GM12878 (cell line): ENCODE measurements at regions of chr2 and their contacts with region 1.

Region 1: DNA sequence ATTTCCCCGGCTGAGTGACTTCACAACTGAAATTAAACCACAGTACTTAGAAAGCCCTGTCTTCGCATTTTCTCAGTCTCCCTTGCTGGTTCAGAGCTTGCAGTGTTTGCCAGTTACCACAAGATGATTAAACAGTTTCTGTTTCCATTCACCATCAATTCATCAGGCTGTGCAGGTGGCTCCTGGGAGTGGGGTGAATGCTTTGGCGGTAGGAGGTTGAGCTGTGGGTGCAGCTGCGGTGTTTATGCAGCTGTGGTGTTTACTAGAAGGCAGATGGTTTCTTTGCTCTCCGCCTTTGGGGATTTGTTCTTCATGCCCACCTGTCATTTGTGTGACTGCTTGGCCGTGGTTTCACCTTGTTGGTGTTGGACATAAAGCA is 16.1 kb downstream of the ACOXL start:
- DNase-seq: peak; percentile 98
- ATAC-seq: peak; percentile 97
- H3K4me3 ChIP-seq: peak overlapping the region; percentile 21; the same call in 1 of the 2 replicates
- H3K27ac ChIP-seq: no peak overlapping the region
- H3K4me1 ChIP-seq: peaks cover 19% of the 10 kb centered on the region; the same call in 1 of the 2 replicates
- H3K27me3 ChIP-seq: no peaks in the 10 kb centered on the region
- CTCF ChIP-seq: no peak
- EP300 ChIP-seq: peak; percentile 90 to 97
- POLR2A ChIP-seq: no peak
- RAD21 ChIP-seq: peak; percentile 22; the same call in 1 of the 2 replicates

Region 2: GRCh38 chr2:110657724-110658305 is 90.7 kb before region 1 on chr2:
- CTCF ChIA-PET with region 1: interaction called, 4 read pairs
- POLR2A ChIA-PET with region 1: no interaction called
- RAD21 ChIA-PET with region 1: interaction called, 12 read pairs
- SMC1A ChIA-PET with region 1: interaction called, 6 read pairs
- in situ Hi-C with region 1: no loop called
- intact Hi-C with region 1: no loop called
- DNase-seq: no peak
- ATAC-seq: peak; percentile 71
- H3K4me3 ChIP-seq: no peak overlapping the region
- H3K27ac ChIP-seq: no peak overlapping the region
- H3K4me1 ChIP-seq: no peaks in the 10 kb centered on the region
- H3K27me3 ChIP-seq: no peaks in the 10 kb centered on the region
- CTCF ChIP-seq: no peak
- EP300 ChIP-seq: no peak
- POLR2A ChIP-seq: no peak
- RAD21 ChIP-seq: no peak

Region 3: DNA sequence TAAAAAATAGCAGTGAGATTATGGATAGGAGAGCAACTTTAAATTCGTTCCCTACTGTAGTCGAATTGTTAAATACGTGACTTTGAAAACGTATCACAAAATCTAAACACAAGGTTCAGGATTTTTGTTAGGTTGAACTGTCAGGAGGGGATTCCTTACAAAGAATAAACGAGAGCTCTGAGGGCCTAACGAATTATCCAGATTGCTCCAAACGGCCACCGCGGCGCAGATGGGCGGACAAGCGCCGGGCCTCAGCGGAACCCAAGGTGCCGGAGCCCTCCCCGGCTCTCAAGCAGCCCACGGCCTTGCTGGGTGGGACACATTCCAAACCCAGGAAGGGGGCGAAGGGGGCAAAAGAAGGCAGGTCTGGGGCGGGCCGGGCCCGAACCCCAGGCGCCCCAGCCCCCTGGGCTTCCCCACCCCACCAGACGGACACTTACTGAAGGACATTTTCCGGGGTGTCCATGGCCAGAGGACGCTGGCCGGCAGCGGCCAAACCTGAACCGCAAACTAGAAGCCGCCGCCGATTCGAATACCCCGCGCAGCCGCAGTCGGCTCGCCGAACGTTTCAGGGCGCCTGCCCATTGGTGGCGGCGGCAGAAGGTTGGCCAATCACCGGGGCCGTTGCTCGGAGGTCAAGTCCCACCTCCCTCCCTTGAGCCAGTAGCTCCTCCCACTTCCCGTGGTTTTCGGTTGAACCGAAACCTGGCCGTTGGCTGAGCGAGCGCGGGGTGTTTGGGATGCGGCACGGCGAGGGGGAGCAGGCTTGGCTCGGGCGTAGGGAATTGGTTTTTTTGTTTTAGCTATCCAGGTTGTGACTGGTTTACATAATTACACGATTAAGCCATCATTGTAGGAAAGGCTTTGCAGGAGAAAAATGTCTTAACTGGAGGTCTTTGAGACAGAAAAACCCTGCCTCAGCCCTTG is 70.7 kb before region 1 on chr2 and contains the start of gene BUB1:
- CTCF ChIA-PET with region 1: interaction called, 48 read pairs
- POLR2A ChIA-PET with region 1: interaction called, 28 read pairs
- RAD21 ChIA-PET with region 1: interaction called, 53 read pairs
- SMC1A ChIA-PET with region 1: interaction called, 251 read pairs
- in situ Hi-C with region 1: loop called (anchors 10 kb)
- intact Hi-C with region 1: loop called (anchors 2 kb)
- DNase-seq: peak; percentile 83
- ATAC-seq: peak; percentile 88
- H3K4me3 ChIP-seq: peak within 1 kb of the TSS; percentile 87
- H3K27ac ChIP-seq: peak within 1 kb of the TSS; percentile 98
- H3K4me1 ChIP-seq: peaks cover 9% of the 10 kb centered on the region
- H3K27me3 ChIP-seq: no peaks in the 10 kb centered on the region
- CTCF ChIP-seq: no peak
- EP300 ChIP-seq: peak in 1 of 2 experiments; percentile 52; a peak in 2 of 4 replicates
- POLR2A ChIP-seq: peak; percentile 87
- RAD21 ChIP-seq: no peak
- polyA plus RNA-seq, gene BUB1: 52.4 to 57.0 TPM

Region 4: DNA sequence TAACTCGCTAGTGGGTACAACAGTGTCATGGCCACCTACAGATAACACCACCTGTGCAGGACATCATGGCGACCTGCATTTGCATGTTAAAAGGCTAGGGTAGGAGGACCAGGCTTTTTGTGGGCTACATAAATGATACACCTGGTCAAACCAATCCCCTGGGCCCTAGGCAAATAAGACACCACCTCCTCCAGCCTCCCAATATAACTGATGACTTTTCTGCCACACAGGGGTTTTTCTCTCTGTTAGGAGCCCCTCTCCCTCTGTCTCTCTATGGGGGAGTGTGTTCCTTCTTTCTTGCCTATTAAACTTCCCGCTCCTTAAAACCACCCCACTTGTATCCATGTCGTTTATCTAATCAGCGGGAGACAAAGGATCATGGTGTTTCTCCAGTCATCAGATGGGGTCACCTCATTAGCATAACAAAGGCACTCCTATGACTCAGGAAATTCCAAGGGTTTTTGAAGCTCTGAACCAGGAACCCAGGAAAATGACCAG is 59.8 kb before region 1 on chr2:
- CTCF ChIA-PET with region 1: interaction called, 3 read pairs
- POLR2A ChIA-PET with region 1: interaction called, 3 read pairs
- RAD21 ChIA-PET with region 1: interaction called, 5 read pairs
- SMC1A ChIA-PET with region 1: interaction called, 3 read pairs
- in situ Hi-C with region 1: loop called (anchors 10 kb)
- intact Hi-C with region 1: no loop called
- DNase-seq: no peak
- ATAC-seq: no peak
- H3K4me3 ChIP-seq: no peak overlapping the region
- H3K27ac ChIP-seq: no peak overlapping the region
- H3K4me1 ChIP-seq: no peaks in the 10 kb centered on the region
- H3K27me3 ChIP-seq: no peaks in the 10 kb centered on the region
- CTCF ChIP-seq: no peak
- EP300 ChIP-seq: no peak
- POLR2A ChIP-seq: no peak
- RAD21 ChIP-seq: no peak

Region 5: GRCh38 chr2:110713513-110714362 is 34.7 kb before region 1 on chr2:
- CTCF ChIA-PET with region 1: no interaction called
- POLR2A ChIA-PET with region 1: interaction called, 3 read pairs
- RAD21 ChIA-PET with region 1: interaction called, 11 read pairs
- SMC1A ChIA-PET with region 1: interaction called, 6 read pairs
- in situ Hi-C with region 1: no loop called
- intact Hi-C with region 1: no loop called
- DNase-seq: no peak
- ATAC-seq: peak; percentile 55
- H3K4me3 ChIP-seq: no peak overlapping the region
- H3K27ac ChIP-seq: no peak overlapping the region
- H3K4me1 ChIP-seq: no peaks in the 10 kb centered on the region
- H3K27me3 ChIP-seq: peaks cover 0 to 3% of the 10 kb centered on the region in 2 experiments; a peak in 1 of 4 replicates
- CTCF ChIP-seq: no peak
- EP300 ChIP-seq: no peak
- POLR2A ChIP-seq: no peak
- RAD21 ChIP-seq: no peak

Region 6: GRCh38 chr2:110737783-110738182 is 10.7 kb before region 1 on chr2:
- CTCF ChIA-PET with region 1: interaction called, 3 read pairs
- POLR2A ChIA-PET with region 1: interaction called, 3 read pairs
- RAD21 ChIA-PET with region 1: interaction called, 4 read pairs
- SMC1A ChIA-PET with region 1: interaction called, 11 read pairs
- in situ Hi-C with region 1: no loop called
- intact Hi-C with region 1: no loop called
- DNase-seq: no peak
- ATAC-seq: no peak
- H3K4me3 ChIP-seq: no peak overlapping the region
- H3K27ac ChIP-seq: no peak overlapping the region
- H3K4me1 ChIP-seq: peaks cover 7% of the 10 kb centered on the region
- H3K27me3 ChIP-seq: peaks cover 5 to 9% of the 10 kb centered on the region in 2 experiments
- CTCF ChIP-seq: no peak
- EP300 ChIP-seq: no peak
- POLR2A ChIP-seq: no peak
- RAD21 ChIP-seq: no peak